Heart right ventricle (tissue), 16 donors: ENCODE measurements at regions of chr5 and their contacts with region 1.

Region 1: GRCh38 chr5:68287976-68288706 is 72.6 kb downstream of the PIK3R1 start:
- DNase-seq: peak; percentile 70 to 73
- ATAC-seq: peak; percentile 85 to 92 (median 89)
- H3K4me3 ChIP-seq: peak overlapping the region; percentile 33 to 71 (median 62)
- H3K27ac ChIP-seq: peak overlapping the region; percentile 60 to 95 (median 90)
- H3K4me1 ChIP-seq: peaks cover 10 to 84% (median 68%) of the 10 kb centered on the region in 9 donors
- H3K27me3 ChIP-seq: no peaks in the 10 kb centered on the region
- CTCF ChIP-seq: no peak

Region 2: DNA sequence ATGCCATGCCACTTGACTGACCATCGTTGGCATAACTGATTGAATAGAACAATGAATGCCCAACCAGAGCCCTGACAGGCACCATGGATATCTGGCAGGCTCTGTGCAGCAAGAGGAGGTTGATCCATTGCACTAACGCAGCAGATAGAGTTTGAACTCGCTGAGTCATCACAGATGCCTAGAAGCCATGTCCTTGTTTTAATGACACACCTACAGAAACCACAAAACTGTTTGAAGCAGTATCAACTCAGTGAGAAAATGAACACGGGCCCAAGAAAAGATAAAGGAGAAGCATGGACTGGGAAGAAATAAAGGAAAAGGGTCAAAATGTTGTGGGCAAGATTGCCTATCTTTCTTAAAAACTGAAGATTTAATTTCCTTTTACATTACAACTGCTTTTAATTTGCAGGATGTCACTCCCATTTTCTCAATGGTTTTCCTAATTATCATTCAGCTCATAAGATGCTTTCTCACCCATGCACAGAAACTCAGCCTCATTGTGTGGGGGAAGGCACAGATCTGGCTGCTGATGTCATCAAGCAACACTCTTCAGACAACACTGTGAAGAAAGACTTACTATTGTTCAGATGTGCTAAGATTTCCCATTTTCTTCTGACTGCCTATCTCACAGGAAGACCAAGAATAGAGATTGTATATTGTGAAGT is 56.4 kb after region 1 on chr5:
- intact Hi-C with region 1: loop called in 1 of 10 experiments (anchors 5 kb)
- DNase-seq: no peak
- ATAC-seq: no peak
- H3K4me3 ChIP-seq: no peak overlapping the region
- H3K27ac ChIP-seq: peak overlapping the region in 2 of 10 donors; percentile 42 to 61
- H3K4me1 ChIP-seq: peaks cover 0 to 34% (median 12%) of the 10 kb centered on the region in 9 donors
- H3K27me3 ChIP-seq: no peaks in the 10 kb centered on the region
- CTCF ChIP-seq: no peak

Region 3: DNA sequence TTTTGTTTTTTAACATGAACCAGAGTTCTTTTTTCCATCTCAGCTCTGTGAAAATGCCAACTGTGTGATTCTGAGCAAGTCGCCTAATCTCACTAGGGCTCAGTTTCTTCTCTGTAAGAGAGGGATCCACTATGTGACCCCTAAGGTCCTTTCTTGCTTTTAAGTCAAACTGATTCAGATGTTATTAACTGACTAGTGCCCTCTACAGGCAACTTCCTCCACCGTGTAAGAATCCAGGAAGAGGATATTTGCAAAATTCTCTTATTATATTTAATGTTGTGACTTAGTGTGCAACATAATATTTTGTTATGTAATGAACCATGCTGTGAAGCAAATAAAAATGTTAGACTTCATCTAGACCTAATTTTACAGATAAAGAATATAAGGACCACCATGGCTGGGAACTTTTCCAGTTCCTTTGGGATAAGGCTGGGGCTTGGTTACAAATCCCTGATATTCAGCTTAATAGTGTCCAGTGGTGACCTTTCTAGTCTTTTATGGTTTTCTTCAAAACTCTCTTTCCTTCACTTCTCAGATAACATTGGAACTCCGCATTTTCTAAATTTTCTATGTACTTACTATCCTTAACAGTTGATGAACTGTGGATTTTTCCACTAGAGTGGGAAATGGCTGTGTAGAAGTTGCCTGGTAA is 172.1 kb after region 1 on chr5:
- intact Hi-C with region 1: loop called (anchors 1 to 5 kb)
- DNase-seq: peak in 1 of 2 donors; percentile 57
- ATAC-seq: peak in 5 of 8 donors; percentile 42 to 71 (median 59)
- H3K4me3 ChIP-seq: no peak overlapping the region
- H3K27ac ChIP-seq: peak overlapping the region in 1 of 10 donors; percentile 11
- H3K4me1 ChIP-seq: peaks cover 0 to 29% (median 8%) of the 10 kb centered on the region in 9 donors
- H3K27me3 ChIP-seq: no peaks in the 10 kb centered on the region
- CTCF ChIP-seq: peak; percentile 46 to 90 (median 78)

Region 4: GRCh38 chr5:68548959-68549687 is 261.0 kb after region 1 on chr5:
- intact Hi-C with region 1: loop called in 1 of 10 experiments (anchors 10 kb)
- DNase-seq: no peak
- ATAC-seq: no peak
- H3K4me3 ChIP-seq: no peak overlapping the region
- H3K27ac ChIP-seq: no peak overlapping the region
- H3K4me1 ChIP-seq: no peaks in the 10 kb centered on the region
- H3K27me3 ChIP-seq: no peaks in the 10 kb centered on the region
- CTCF ChIP-seq: no peak

Region 5: GRCh38 chr5:68740204-68740910 is 452.2 kb after region 1 on chr5:
- intact Hi-C with region 1: loop called in 1 of 10 experiments (anchors 5 kb)
- DNase-seq: no peak
- ATAC-seq: no peak
- H3K4me3 ChIP-seq: no peak overlapping the region
- H3K27ac ChIP-seq: no peak overlapping the region
- H3K4me1 ChIP-seq: peaks cover 0 to 4% (median 0%) of the 10 kb centered on the region in 9 donors
- H3K27me3 ChIP-seq: no peaks in the 10 kb centered on the region
- CTCF ChIP-seq: no peak

Region 6: DNA sequence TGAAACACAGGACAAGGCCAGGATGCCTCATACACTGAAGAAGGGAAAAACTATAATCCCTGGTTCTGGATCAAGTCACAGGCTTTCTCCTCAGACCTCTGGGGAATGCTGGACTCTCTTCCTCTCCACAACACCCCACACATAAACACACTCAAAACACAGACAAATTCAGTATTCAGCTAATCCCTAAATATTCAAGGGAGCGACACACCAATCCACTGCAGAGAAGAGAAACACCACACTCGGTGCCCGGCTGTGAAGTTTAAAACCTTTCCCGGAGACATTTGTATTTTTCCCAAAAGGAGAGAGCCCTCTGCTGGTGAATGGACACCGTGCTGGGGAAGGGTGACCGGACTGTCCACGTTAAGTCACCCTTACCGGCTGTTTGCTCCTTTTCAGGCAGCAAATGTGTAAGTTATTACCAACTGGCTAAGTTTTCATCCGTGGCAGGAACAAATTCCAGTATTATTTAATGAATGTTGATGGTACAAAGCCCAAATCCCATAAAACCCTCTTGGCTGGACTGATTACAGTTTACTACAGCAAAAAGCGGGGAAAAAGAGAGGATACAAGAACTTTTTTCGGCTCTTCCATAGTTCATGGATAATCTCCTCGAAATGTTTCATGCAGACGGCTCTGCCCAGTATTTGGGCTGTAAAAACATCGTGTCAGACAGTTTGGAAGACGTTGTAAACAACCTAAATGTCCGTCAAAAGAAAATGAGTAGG is 674.8 kb after region 1 on chr5:
- intact Hi-C with region 1: loop called (anchors 1 to 10 kb)
- DNase-seq: peak; percentile 46 to 77
- ATAC-seq: peak; percentile 76 to 96 (median 88)
- H3K4me3 ChIP-seq: no peak overlapping the region
- H3K27ac ChIP-seq: peak overlapping the region in 2 of 10 donors; percentile 16 to 43
- H3K4me1 ChIP-seq: peaks cover 0 to 13% (median 5%) of the 10 kb centered on the region in 9 donors
- H3K27me3 ChIP-seq: no peaks in the 10 kb centered on the region
- CTCF ChIP-seq: peak; percentile 58 to 94 (median 84)

Region 7: GRCh38 chr5:69007726-69008368 is 719.7 kb after region 1 on chr5:
- intact Hi-C with region 1: loop called in 4 of 10 experiments (anchors 5 kb)
- DNase-seq: peak; percentile 53 to 58
- ATAC-seq: peak in 7 of 8 donors; percentile 33 to 74 (median 73)
- H3K4me3 ChIP-seq: no peak overlapping the region
- H3K27ac ChIP-seq: no peak overlapping the region
- H3K4me1 ChIP-seq: no peaks in the 10 kb centered on the region
- H3K27me3 ChIP-seq: peaks cover 0 to 4% (median 0%) of the 10 kb centered on the region in 7 donors
- CTCF ChIP-seq: peak; percentile 37 to 88 (median 80)